Activated T-helper 1 cell treated with anti-CD3 and anti-CD28 coated beads, Interleukin-12 subunit alpha, Interleukin-12 subunit beta, Interleukin-2, Interleukin-4 antibody, amounts not matched to agents 30 ng/mL and 10 ng/mL and 1 ng/mL, durations not matched to agents 14 hours and 24 hours and 36 hours (primary cell): ENCODE measurements at regions of chr3 and their contacts with region 1.

Region 1: DNA sequence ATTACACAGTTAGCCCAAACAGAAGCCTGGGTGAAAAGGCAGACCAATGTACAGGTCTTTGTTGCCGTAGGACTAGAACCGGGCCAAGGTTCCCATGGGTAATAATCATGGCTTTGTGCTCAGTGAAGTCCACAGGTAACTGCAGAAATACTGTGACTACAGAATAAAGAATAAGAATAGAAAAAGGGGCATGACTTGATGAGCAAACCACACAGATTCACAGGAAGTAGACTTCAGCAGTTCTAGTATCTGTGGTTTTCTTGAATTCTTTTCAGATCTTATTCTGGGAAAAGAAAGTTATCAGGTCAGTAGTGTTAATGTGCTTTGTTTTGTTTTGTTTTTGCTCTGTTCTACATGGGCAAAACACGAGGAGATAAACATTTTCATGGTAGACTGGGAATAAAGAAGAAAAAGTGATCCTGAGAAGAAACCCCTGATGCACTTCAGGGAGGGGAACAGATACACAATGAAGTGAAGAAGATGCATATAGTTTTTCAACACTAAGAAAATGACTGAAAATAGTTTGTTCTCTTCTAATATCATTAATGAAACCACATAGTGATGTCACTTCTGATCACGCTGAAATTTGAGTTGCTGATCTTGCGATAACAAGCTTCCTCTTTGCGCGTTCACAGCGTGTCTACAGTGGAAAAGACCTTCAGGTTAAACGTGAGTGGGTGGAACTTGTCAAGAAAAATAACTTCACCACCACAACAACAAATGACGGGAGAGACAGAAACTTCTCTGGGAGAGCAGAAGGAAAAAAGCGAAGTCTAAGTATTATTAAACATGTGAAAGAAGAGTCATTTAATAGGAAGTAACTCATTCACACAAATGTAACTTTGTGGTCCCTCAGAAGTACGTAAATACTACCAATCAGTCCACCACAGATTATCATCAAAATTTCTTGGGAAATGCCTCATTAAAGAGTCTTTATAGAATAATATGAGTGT is 315.8 kb upstream of the SATB1 start:
- DNase-seq: peak; percentile 62
- H3K4me3 Mint-ChIP-seq: peak overlapping the region; percentile 50
- H3K27ac Mint-ChIP-seq: peak overlapping the region; percentile 90
- H3K4me1 Mint-ChIP-seq: peaks cover 92% of the 10 kb centered on the region
- H3K27me3 Mint-ChIP-seq: no peaks in the 10 kb centered on the region

Region 2: GRCh38 chr3:18199757-18200156 is 541.1 kb before region 1 on chr3:
- intact Hi-C with region 1: no loop called
- DNase-seq: no peak
- H3K4me3 Mint-ChIP-seq: no peak overlapping the region
- H3K27ac Mint-ChIP-seq: no peak overlapping the region
- H3K4me1 Mint-ChIP-seq: no peaks in the 10 kb centered on the region
- H3K27me3 Mint-ChIP-seq: peaks cover 4% of the 10 kb centered on the region

Region 3: GRCh38 chr3:18424729-18425640 is 315.9 kb before region 1 on chr3 and contains the start of gene SATB1:
- intact Hi-C with region 1: loop called (anchors 1 kb)
- DNase-seq: peak; percentile 54
- H3K4me3 Mint-ChIP-seq: peak within 1 kb of the TSS; percentile 91
- H3K27ac Mint-ChIP-seq: peak within 1 kb of the TSS; percentile 94
- H3K4me1 Mint-ChIP-seq: peaks cover 72% of the 10 kb centered on the region
- H3K27me3 Mint-ChIP-seq: peaks cover 6% of the 10 kb centered on the region
- total RNA-seq, gene SATB1: 679 and 686 TPM in 2 replicates

Region 4: DNA sequence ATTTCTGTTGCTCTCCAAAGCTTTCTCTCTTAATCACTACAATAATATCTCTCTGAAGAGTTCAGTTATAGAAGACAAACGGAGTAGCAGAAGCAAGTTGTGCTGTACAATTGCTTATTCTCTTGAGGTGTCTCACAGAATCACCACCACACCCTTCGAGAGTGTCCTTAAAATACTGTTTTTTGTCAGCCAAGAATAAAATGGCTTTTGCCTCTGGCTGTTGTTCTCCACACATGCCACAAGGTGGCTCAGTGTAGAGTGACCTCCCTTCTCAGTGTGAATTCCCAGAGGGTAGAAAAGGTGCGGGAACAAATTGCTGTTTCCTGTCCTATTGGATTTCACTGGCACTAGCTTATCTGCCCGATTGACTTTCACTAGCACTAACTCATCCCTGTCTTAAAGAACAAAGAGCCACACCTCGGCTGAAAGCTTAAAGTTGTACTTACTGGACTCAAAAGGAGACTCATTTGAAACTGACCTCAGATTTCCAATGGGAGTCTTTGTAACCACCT is 181.5 kb before region 1 on chr3:
- intact Hi-C with region 1: loop called (anchors 1 kb)
- DNase-seq: peak; percentile 27
- H3K4me3 Mint-ChIP-seq: peak overlapping the region; percentile 64
- H3K27ac Mint-ChIP-seq: peak overlapping the region; percentile 90
- H3K4me1 Mint-ChIP-seq: peaks cover 66% of the 10 kb centered on the region
- H3K27me3 Mint-ChIP-seq: no peaks in the 10 kb centered on the region

Region 5: DNA sequence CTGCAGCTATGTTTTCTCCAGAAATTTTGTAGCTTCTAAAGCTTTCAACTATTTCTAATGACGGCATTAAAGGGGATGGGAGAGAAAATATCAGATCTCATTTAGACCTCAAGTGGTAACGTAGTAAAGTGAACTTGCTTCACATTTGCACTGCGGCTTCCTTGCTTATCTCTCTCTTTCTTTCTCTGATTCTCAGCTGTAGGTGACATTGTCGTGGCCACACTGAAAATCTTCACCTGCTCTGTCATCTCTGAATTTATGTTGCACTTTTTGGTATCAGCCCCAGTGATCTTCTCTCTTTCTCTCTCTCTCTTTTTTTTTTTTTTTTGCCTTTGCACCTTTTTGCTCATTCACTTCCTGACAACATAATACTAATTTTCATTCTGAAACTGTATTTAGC is 61.7 kb before region 1 on chr3:
- intact Hi-C with region 1: loop called (anchors 1 kb)
- DNase-seq: peak; percentile 62
- H3K4me3 Mint-ChIP-seq: peak overlapping the region; percentile 19
- H3K27ac Mint-ChIP-seq: peak overlapping the region; percentile 77
- H3K4me1 Mint-ChIP-seq: peaks cover 89% of the 10 kb centered on the region
- H3K27me3 Mint-ChIP-seq: no peaks in the 10 kb centered on the region

Region 6: GRCh38 chr3:18725668-18726407 is 15.1 kb before region 1 on chr3:
- intact Hi-C with region 1: loop called (anchors 1 kb)
- DNase-seq: peak; percentile 31
- H3K4me3 Mint-ChIP-seq: peak overlapping the region; percentile 82
- H3K27ac Mint-ChIP-seq: peak overlapping the region; percentile 98
- H3K4me1 Mint-ChIP-seq: peaks cover 71% of the 10 kb centered on the region
- H3K27me3 Mint-ChIP-seq: no peaks in the 10 kb centered on the region

Region 7: DNA sequence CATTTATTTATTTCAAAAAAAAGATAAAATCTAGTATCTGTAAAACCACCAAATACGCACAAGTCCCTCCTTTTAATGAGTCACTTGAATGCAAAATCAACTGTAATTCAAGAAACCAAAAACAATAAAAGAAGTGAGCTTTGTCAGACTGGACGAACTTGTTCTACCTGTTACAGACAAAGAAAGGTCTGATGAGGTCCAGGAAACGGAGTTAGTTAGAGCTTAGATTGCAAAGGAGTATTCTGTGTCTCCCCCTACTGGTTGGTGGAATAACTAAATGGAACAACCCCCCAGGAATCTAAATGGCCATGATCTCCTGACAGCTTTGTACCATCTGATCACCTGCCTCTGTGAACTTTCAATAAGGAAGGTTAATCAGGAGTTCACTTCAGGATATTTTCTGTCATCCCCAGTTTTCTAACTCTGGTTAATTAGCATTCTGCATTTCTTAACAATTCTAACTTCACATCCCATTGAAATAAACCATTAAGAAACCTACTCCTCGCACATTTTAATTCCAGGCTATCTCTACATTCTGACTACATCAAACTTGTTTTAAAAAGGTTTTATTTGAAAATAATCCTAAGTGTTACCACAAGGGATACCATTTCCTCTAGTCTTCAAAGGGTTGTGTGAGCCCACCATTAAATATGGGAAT is 17.3 kb after region 1 on chr3:
- intact Hi-C with region 1: loop called (anchors 1 kb)
- DNase-seq: peak; percentile 50
- H3K4me3 Mint-ChIP-seq: no peak overlapping the region
- H3K27ac Mint-ChIP-seq: peak overlapping the region; percentile 73
- H3K4me1 Mint-ChIP-seq: peaks cover 50% of the 10 kb centered on the region
- H3K27me3 Mint-ChIP-seq: no peaks in the 10 kb centered on the region

Region 8: GRCh38 chr3:19931180-19931692 is 1190.3 kb after region 1 on chr3:
- intact Hi-C with region 1: loop called (anchors 5 kb)
- DNase-seq: peak; percentile 39
- H3K4me3 Mint-ChIP-seq: peak overlapping the region; percentile 50
- H3K27ac Mint-ChIP-seq: peak overlapping the region; percentile 95
- H3K4me1 Mint-ChIP-seq: peaks cover 38% of the 10 kb centered on the region
- H3K27me3 Mint-ChIP-seq: peaks cover 4% of the 10 kb centered on the region